A549 (cell line): ENCODE measurements at regions of chr15 and their contacts with region 1.

Region 1: GRCh38 chr15:92097474-92098178 is 244.1 kb downstream of the SLCO3A1 start:
- DNase-seq: peak; percentile 52 to 72
- ATAC-seq: peak; percentile 91 to 98
- H3K4me3 ChIP-seq: no peak overlapping the region
- H3K27ac ChIP-seq: no peak overlapping the region
- H3K4me1 ChIP-seq: no peaks in the 10 kb centered on the region
- CTCF ChIP-seq: peak; percentile 88
- EP300 ChIP-seq: no peak
- POLR2A ChIP-seq: no peak
- RAD21 ChIP-seq: peak; percentile 90 to 92

Region 2: DNA sequence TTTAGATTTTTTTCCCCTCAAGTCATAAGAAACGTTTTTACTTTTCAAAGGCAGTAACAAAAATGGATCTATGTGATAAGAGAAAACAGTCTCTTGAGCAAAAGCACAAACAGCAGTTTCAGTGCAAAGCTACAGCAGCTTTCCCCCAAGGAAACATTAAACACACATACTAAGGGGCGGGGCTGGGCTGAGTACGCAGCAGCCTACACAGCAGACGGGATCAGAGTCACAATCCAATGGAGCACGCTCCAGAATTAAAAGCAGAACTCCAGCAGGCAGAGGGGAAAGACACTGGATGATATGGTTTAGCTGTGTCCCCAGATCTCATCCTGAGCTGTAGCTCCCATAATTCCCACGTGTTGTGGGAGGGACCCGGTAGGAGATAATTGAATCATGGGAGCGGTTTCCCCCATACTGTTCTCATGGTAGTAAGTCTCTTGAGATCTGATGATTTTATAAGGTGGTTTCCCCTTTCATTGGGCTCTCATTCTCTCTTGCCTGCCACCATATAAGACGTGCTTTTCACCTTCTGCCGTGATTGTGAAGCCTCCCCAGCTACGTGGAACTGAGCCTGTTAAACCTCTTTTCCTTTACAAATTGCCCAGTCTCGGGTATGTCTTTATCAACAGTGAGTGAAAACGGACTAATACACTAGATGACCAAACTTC is 360.3 kb before region 1 on chr15:
- CTCF ChIA-PET with region 1: no interaction called
- POLR2A ChIA-PET with region 1: no interaction called
- DNase-seq: no peak
- ATAC-seq: no peak; a peak in 1 of 6 replicates
- H3K4me3 ChIP-seq: no peak overlapping the region; the same call in 2 of the 3 replicates
- H3K27ac ChIP-seq: no peak overlapping the region
- H3K4me1 ChIP-seq: no peaks in the 10 kb centered on the region
- CTCF ChIP-seq: no peak
- EP300 ChIP-seq: no peak
- POLR2A ChIP-seq: no peak
- RAD21 ChIP-seq: no peak

Region 3: DNA sequence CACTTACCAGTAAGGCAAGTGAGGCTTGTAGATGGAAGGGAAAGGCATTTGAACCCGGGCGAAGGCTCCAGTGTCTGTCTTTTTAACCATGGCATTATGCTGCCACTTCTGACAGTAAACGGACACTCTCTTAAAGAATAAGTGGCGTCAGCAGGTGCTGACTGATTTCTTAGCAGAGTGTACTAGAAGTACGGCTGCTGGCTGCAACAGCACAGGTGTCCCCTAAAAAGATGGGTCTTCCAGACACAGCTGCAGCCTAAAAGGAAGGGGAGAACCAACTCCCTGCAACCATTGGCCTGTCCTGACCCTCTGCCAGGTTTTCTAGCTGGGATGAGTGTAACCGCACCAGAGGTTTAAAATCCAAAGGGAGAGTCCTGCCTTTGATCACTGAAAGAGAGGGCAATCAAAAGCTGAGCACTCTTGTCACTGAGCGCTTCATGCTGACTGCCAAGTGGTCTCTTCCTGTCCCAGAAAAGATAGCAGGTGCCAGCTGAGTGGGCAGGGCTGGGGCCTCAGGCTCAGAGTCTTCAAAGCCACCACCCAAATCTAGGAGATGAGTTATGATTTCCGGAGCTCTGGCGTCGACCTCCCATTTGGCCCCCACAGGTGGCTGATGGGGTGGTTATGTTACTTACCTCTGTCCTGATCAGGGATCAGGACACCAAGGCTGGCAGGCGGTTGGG is 11.7 kb after region 1 on chr15:
- CTCF ChIA-PET with region 1: interaction called, 36 read pairs
- POLR2A ChIA-PET with region 1: no interaction called
- DNase-seq: no peak
- ATAC-seq: no peak
- H3K4me3 ChIP-seq: no peak overlapping the region
- H3K27ac ChIP-seq: no peak overlapping the region
- H3K4me1 ChIP-seq: no peaks in the 10 kb centered on the region
- CTCF ChIP-seq: no peak
- EP300 ChIP-seq: no peak
- POLR2A ChIP-seq: no peak
- RAD21 ChIP-seq: no peak

Region 4: DNA sequence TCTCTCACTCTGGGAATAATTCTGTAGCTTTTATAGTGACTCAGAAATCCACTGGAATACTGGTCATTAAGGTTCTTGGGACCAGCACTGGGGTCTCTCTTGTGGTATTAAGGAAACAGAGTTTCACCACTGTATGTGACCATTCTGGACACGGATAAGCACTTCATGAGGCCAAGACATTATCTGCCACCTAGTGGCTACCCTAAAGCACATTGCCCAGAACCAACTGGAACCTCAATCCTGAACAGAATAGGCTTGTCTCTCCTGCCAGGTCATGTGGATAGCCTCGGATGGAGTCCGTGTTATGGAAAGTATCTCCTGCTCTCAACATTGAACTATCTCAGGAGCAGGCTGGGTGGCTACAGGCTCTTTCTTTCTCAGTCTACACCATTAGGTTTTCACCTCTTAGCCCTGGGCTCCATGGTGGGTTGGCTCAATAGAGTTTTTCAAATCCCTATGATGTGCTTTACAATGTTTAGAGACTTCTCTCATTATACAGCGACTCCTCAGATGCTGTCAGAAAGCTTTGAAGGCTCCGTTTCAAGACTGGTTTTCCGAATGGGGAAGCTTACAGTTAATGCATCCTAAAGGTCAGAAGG is 128.5 kb after region 1 on chr15:
- CTCF ChIA-PET with region 1: interaction called, 18 read pairs
- POLR2A ChIA-PET with region 1: no interaction called
- DNase-seq: peak in 1 of 2 experiments; percentile 32
- ATAC-seq: peak; percentile 71 to 91; a peak in 4 of 6 replicates
- H3K4me3 ChIP-seq: no peak overlapping the region
- H3K27ac ChIP-seq: no peak overlapping the region
- H3K4me1 ChIP-seq: no peaks in the 10 kb centered on the region
- CTCF ChIP-seq: peak; percentile 39
- EP300 ChIP-seq: no peak
- POLR2A ChIP-seq: no peak
- RAD21 ChIP-seq: peak in 1 of 2 experiments; percentile 55; a peak in 2 of 5 replicates